CD14-positive monocyte (primary cell): ENCODE measurements at regions of chr16 and their contacts with region 1.

Region 1: DNA sequence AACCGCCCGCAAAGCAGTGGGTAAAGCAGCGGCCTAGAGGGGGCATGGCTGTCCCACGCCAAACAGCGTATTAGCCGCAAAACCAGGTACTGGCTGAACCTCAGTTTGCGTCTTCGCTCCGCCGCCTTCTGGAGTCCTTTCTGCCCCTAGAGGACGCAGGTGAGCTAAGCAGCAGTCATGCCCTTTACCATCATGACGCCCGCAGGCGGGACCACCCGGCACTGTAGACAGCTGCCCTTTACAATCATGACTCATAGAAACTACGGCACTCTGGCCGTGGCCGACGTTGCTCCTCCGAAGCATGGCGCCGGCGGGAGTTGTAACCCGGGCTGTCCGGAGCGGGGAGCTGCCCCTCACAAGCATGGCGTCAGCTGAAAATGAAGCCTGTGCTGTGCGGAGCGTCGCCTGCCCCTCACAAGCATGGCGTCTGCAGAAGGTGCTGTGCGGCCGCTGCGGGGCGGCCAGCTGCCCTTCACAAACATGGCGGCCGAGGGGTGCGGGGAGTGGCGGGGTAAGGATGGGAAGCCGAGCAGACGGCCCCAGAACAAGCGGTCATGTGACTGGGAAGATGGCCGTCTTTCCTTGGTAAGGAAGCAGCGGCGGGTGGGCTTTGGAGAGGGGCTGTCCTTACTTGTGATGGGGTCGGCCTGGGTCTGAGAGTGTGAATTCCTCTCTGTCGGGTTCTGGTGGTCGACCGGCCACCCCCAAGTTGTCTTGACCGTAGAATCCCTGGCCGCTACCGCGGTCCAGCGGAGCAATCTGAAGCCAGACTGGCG is at the start of gene VPS35L:
- DNase-seq: peak; percentile 98 to 100 (median 99)
- H3K4me3 ChIP-seq: peak within 1 kb of the TSS; percentile 69 to 89 (median 82)
- H3K4me3 Mint-ChIP-seq: peak within 1 kb of the TSS; percentile 86 to 95
- H3K27ac ChIP-seq: peak within 1 kb of the TSS; percentile 83 to 95
- H3K27ac Mint-ChIP-seq: peak within 1 kb of the TSS; percentile 91 to 99 (median 97)
- H3K4me1 ChIP-seq: peaks cover 14 to 19% of the 10 kb centered on the region in 2 donors
- H3K4me1 Mint-ChIP-seq: peaks cover 13% of the 10 kb centered on the region
- H3K27me3 ChIP-seq: no peaks in the 10 kb centered on the region
- H3K27me3 Mint-ChIP-seq: peaks cover 0 to 5% (median 3%) of the 10 kb centered on the region in 3 donors
- CTCF ChIP-seq: peak; percentile 81
- polyA plus RNA-seq, gene VPS35L: 29.7 to 51.4 (median 48.8) TPM

Region 2: GRCh38 chr16:18801197-18801972 is 754.0 kb before region 1 on chr16 and contains the start of gene ARL6IP1:
- intact Hi-C with region 1: loop called in 1 of 2 experiments (anchors 10 kb)
- DNase-seq: peak; percentile 99 to 100 (median 100)
- H3K4me3 ChIP-seq: peak within 1 kb of the TSS; percentile 65 to 94 (median 92)
- H3K4me3 Mint-ChIP-seq: peak within 1 kb of the TSS; percentile 93 to 98
- H3K27ac ChIP-seq: peak within 1 kb of the TSS; percentile 93 to 95
- H3K27ac Mint-ChIP-seq: peak within 1 kb of the TSS; percentile 93 to 98 (median 95)
- H3K4me1 ChIP-seq: peaks cover 52 to 71% of the 10 kb centered on the region in 2 donors
- H3K4me1 Mint-ChIP-seq: peaks cover 64% of the 10 kb centered on the region
- H3K27me3 ChIP-seq: no peaks in the 10 kb centered on the region
- H3K27me3 Mint-ChIP-seq: no peaks in the 10 kb centered on the region
- CTCF ChIP-seq: peak; percentile 98
- polyA plus RNA-seq, gene ARL6IP1: 89.0 to 158 (median 142) TPM

Region 3: DNA sequence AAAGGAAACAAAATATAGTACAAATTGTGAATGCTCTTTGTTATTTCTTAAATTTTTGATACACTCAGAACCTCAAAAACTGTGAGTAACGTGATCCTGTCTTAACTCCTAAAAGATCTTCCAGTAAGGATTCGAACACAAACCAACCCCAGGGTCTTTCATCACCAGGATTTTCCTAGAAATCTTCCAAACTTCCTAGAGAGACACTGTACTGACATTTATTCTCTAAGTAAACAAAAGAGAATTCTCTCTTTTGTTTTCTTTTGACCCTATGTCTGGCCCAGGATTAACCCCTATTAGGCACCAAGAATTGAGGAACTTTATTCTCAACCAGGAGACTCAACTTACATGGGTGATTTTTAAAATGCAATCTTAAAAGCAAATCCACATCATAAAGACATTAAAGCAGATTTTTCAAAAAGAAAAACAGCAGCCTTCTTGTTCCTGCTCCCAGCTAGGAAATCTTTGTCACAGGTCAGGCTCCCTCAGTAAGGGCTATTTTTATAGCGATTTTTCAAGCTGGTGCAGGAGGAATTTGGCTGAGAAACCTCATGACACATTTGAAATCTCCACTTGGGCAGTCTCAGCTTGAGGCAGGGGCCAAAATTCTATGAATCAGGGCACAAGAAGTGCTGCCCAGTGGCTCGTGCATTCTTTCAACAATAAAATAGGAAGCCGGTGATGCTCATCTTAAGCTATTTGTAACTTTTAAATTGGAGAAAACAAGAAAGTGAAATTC is 622.9 kb before region 1 on chr16:
- intact Hi-C with region 1: loop called in 1 of 2 experiments (anchors 10 kb)
- DNase-seq: no peak
- H3K4me3 ChIP-seq: no peak overlapping the region
- H3K4me3 Mint-ChIP-seq: no peak overlapping the region
- H3K27ac ChIP-seq: no peak overlapping the region
- H3K27ac Mint-ChIP-seq: no peak overlapping the region
- H3K4me1 ChIP-seq: no peaks in the 10 kb centered on the region
- H3K4me1 Mint-ChIP-seq: peaks cover 4% of the 10 kb centered on the region
- H3K27me3 ChIP-seq: no peaks in the 10 kb centered on the region
- H3K27me3 Mint-ChIP-seq: peaks cover 0 to 4% (median 3%) of the 10 kb centered on the region in 3 donors
- CTCF ChIP-seq: no peak

Region 4: DNA sequence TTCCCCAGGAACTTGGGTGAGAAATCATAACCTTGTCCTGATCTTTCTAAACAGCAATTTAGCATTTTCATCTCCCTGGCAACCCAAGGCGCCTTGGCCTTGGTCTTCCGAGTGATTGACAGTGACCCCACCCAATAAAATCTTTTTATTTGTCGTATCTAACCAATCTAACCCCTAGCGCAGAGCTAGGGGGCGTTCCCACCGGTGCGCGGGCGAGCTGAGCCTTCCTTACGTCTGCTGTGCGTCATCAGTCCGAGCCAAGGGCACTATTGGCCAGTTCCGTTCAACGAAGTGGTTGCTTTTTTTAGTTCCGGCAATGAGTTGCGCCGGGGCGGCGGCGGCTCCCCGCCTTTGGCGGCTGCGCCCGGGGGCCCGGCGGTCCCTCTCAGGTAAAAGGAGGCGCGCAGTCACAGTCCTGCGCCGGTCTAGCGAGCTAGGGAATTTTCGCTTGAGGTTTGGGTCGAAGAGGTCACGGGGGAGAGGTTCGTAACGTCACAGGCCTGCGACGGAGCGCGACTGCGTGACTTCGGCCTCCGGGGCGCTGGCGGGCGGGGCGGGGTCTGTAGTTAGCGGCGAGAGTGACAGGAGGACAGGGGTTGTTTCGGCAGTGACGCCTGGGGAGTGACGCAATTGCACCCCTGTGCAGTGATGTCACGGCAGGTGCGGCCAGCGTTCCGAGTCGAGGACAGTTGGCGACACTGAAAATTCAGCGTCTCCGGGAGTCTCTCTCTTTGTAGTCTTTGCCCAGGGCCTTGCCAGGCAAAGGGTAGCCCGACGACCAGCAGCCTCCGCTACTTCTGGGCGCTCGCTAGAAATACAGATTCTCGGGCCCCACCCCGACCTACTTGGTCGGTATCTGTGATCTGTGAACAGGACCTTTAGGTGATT is 487.8 kb before region 1 on chr16 and contains the start of gene COQ7:
- intact Hi-C with region 1: loop called in 1 of 2 experiments (anchors 5 kb)
- DNase-seq: peak; percentile 100
- H3K4me3 ChIP-seq: peak within 1 kb of the TSS; percentile 61 to 85 (median 76)
- H3K4me3 Mint-ChIP-seq: peak within 1 kb of the TSS; percentile 82 to 89
- H3K27ac ChIP-seq: peak within 1 kb of the TSS; percentile 92 to 99
- H3K27ac Mint-ChIP-seq: peak within 1 kb of the TSS; percentile 98 to 99 (median 99)
- H3K4me1 ChIP-seq: peaks cover 19 to 21% of the 10 kb centered on the region in 2 donors
- H3K4me1 Mint-ChIP-seq: peaks cover 17% of the 10 kb centered on the region
- H3K27me3 ChIP-seq: no peaks in the 10 kb centered on the region
- H3K27me3 Mint-ChIP-seq: peaks cover 0 to 3% (median 2%) of the 10 kb centered on the region in 3 donors
- CTCF ChIP-seq: no peak
- polyA plus RNA-seq, gene COQ7: 6.5 to 13.3 (median 12.2) TPM

Region 5: DNA sequence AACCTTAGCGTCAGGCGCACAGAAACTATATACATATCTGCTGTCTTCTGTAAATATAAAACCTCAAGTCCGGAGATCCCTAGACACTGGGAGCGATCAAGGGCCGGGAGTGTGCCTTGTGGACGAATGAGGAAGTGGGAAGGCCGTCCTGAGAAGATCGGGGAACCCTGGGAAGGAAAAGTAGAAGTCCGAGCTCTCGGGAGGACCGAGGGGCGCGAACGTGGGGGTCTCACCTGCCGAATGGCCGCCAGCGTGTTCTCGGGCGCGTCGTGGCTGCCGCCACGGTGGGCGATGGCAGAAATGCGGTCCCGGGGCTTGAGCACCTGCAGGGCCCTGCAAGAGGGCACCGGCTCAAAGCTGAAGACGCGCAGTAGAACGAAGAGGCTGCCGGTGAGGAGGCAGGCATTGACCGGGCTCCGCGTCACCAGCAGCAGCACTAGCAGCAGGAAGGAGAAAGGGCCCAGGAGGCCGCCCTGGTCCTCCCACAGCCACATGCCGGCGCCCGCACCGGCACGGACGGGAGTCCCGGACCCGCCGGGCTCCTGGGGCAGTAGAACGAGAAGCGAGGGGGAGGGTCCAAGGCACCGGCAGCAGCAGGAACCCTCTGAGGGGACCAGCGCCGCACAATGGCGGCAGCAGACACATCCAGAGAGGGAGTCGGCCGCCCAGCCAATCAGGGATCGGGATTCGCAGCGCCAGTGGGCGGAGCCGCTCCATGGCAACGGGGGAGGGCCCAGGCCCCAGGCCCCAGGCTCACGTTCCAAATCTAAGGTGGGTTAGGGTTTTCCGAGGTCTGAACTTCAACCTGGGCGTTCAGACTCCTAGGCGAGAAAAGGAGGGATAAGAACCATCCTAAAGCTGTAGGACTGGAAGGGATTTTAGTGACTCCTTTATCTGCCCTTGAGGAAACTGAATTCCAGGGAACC is 33.6 kb before region 1 on chr16 and contains the start of gene GDE1:
- intact Hi-C with region 1: loop called (anchors 1 to 5 kb)
- DNase-seq: peak; percentile 81 to 89 (median 86)
- H3K4me3 ChIP-seq: peak within 1 kb of the TSS; percentile 71 to 97 (median 88)
- H3K4me3 Mint-ChIP-seq: peak within 1 kb of the TSS; percentile 95 to 98
- H3K27ac ChIP-seq: peak within 1 kb of the TSS; percentile 81 to 91
- H3K27ac Mint-ChIP-seq: peak within 1 kb of the TSS; percentile 87 to 94 (median 93)
- H3K4me1 ChIP-seq: peaks cover 34 to 63% of the 10 kb centered on the region in 2 donors
- H3K4me1 Mint-ChIP-seq: peaks cover 48% of the 10 kb centered on the region
- H3K27me3 ChIP-seq: no peaks in the 10 kb centered on the region
- H3K27me3 Mint-ChIP-seq: peaks cover 0 to 2% (median 0%) of the 10 kb centered on the region in 3 donors
- CTCF ChIP-seq: peak; percentile 24
- polyA plus RNA-seq, gene GDE1: 30.6 to 75.5 (median 71.7) TPM

Region 6: DNA sequence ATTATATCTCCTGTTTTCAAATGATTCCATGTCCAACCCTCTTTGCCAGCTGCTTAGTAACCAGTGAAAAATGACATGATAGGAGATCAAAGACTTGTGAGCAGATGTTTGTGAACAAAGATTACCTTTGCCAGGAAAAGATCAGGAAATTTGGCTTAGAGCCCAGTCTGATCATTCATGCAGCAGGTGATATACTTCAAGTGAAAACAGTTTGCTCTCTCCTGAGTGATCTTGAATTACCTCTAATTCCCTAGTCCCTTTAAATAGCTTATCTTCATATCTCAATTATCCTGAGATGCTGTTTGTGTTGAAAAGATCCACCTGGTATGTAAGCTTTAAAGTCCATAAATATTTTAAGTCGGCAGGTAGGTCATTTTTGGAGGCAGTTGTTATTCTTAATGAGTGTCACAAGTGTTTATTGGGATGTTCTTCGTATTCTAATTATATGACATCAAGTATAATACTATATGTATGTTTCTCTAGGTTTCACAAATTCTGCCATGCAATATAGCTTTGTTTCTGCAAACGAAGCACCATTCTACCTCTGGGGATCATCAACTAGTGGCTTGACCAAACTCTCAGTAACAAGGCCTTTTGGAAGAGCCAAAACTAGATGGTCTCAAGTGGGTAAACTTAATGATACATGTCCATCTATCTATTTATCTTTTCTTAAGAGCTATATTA is 13.1 kb before region 1 on chr16:
- intact Hi-C with region 1: no loop called
- DNase-seq: no peak
- H3K4me3 ChIP-seq: no peak overlapping the region
- H3K4me3 Mint-ChIP-seq: no peak overlapping the region
- H3K27ac ChIP-seq: no peak overlapping the region
- H3K27ac Mint-ChIP-seq: no peak overlapping the region
- H3K4me1 ChIP-seq: no peaks in the 10 kb centered on the region
- H3K4me1 Mint-ChIP-seq: no peaks in the 10 kb centered on the region
- H3K27me3 ChIP-seq: no peaks in the 10 kb centered on the region
- H3K27me3 Mint-ChIP-seq: no peaks in the 10 kb centered on the region
- CTCF ChIP-seq: no peak

Region 7: GRCh38 chr16:19655242-19655777 is 100.0 kb after region 1 on chr16:
- intact Hi-C with region 1: no loop called
- DNase-seq: no peak
- H3K4me3 ChIP-seq: no peak overlapping the region
- H3K4me3 Mint-ChIP-seq: no peak overlapping the region
- H3K27ac ChIP-seq: no peak overlapping the region
- H3K27ac Mint-ChIP-seq: no peak overlapping the region
- H3K4me1 ChIP-seq: no peaks in the 10 kb centered on the region
- H3K4me1 Mint-ChIP-seq: no peaks in the 10 kb centered on the region
- H3K27me3 ChIP-seq: no peaks in the 10 kb centered on the region
- H3K27me3 Mint-ChIP-seq: no peaks in the 10 kb centered on the region
- CTCF ChIP-seq: no peak

Region 8: DNA sequence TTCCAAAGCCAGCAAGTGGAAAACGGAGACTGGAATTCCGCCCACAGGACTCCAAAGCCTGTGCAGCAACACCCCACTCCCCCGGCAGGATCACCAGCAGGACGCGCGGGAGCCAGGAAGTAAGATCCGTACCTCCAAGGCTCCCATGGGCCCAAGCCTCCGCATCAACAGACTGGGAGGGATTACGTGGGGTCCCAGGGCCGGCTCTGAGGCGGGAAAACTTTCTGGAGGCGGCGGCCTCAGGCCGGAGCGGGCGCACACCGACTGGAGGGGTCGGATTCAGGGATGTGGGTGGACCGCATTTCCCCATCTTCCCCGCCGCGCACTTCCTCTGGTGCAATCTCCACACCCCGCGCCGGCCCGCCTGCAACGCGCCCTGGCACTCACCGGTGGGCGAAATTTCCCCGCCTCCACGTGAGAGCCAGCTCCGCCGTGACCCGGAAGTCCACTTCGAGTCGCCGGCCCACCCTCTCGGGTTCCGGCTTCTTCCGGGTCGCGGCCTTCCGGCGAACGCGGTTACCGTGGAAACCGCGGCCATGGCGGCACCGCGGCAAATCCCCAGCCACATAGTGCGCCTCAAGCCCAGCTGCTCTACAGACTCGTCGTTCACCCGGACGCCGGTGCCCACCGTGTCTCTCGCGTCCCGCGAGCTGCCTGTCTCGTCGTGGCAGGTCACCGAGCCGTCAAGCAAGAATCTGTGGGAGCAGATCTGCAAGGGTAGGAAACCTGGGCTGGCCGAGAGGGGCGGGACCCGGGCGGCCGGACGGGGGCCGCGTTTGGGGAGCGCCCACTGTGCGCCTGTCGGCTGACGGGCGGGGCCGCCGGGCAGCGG is 162.6 kb after region 1 on chr16 and contains the starts of genes IQCK and KNOP1:
- intact Hi-C with region 1: loop called in 1 of 2 experiments (anchors 5 kb)
- DNase-seq: peak; percentile 81 to 93 (median 86)
- H3K4me3 ChIP-seq: peak within 1 kb of the TSS; percentile 82 to 99 (median 97)
- H3K4me3 Mint-ChIP-seq: peak within 1 kb of the TSS; percentile 88 to 95
- H3K27ac ChIP-seq: peak within 1 kb of the TSS; percentile 30 to 61
- H3K27ac Mint-ChIP-seq: peak within 1 kb of the TSS; percentile 10 to 85 (median 75)
- H3K4me1 ChIP-seq: peaks cover 14 to 21% of the 10 kb centered on the region in 2 donors
- H3K4me1 Mint-ChIP-seq: peaks cover 26% of the 10 kb centered on the region
- H3K27me3 ChIP-seq: no peaks in the 10 kb centered on the region
- H3K27me3 Mint-ChIP-seq: peaks cover 0 to 3% (median 0%) of the 10 kb centered on the region in 3 donors
- CTCF ChIP-seq: no peak
- polyA plus RNA-seq, gene IQCK: 0.52 to 1.2 (median 0.58) TPM
- polyA plus RNA-seq, gene KNOP1: 1.5 to 2.8 (median 2.4) TPM

Region 9: DNA sequence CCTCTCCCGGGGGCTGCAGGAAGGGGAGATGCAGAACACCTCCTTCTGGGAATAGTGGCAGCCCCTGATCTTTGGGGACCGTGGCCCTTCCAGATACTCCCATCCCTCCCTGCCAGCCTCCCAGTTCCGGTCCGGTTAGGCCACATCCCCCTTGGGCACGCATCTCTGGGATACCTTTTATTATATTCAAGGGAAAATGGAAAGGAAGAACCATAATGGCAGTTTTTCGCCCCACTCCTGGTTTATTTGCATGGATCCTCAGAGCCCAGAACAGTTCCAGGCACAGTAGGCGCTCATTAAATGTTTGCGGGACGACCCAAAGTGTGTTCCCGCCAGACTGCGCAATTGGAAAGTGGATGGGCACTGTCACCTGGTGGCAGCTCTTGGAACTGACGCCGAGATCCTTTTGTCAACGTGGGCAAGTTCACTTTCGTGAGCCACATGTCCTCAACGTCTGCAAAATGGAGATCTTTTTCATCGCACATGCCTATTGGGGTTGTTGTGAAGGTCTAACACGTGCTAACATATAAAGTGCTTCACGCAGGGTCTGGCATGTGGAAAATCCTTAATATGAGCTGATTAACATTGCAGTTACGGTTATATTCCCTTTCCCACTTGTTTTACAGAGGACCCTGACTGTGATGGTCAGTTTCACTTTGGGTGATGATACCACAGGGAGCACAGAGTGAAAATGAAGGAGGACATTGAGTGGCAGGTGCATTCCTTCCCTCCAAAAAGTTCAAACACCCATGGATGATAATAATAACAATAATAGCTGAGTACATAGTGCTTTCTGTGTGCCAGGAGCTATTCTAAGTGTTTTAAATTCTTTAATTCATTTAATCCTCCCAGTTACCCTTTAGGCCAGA is 331.0 kb after region 1 on chr16:
- intact Hi-C with region 1: loop called (anchors 1 to 5 kb)
- DNase-seq: peak; percentile 51 to 64 (median 57)
- H3K4me3 ChIP-seq: peak overlapping the region in 1 of 3 experiments; percentile 78
- H3K4me3 Mint-ChIP-seq: peak overlapping the region; percentile 64 to 94
- H3K27ac ChIP-seq: no peak overlapping the region
- H3K27ac Mint-ChIP-seq: no peak overlapping the region
- H3K4me1 ChIP-seq: peaks cover 22 to 31% of the 10 kb centered on the region in 2 donors
- H3K4me1 Mint-ChIP-seq: peaks cover 22% of the 10 kb centered on the region
- H3K27me3 ChIP-seq: peaks cover 34 to 47% of the 10 kb centered on the region in 2 donors
- H3K27me3 Mint-ChIP-seq: peaks cover 45 to 49% (median 49%) of the 10 kb centered on the region in 3 donors
- CTCF ChIP-seq: peak; percentile 99

Region 10: GRCh38 chr16:19936441-19936840 is 381.1 kb after region 1 on chr16:
- intact Hi-C with region 1: no loop called
- DNase-seq: no peak
- H3K4me3 ChIP-seq: no peak overlapping the region
- H3K4me3 Mint-ChIP-seq: no peak overlapping the region
- H3K27ac ChIP-seq: no peak overlapping the region
- H3K27ac Mint-ChIP-seq: no peak overlapping the region
- H3K4me1 ChIP-seq: no peaks in the 10 kb centered on the region
- H3K4me1 Mint-ChIP-seq: no peaks in the 10 kb centered on the region
- H3K27me3 ChIP-seq: no peaks in the 10 kb centered on the region
- H3K27me3 Mint-ChIP-seq: peaks cover 0 to 7% (median 5%) of the 10 kb centered on the region in 3 donors
- CTCF ChIP-seq: no peak